ENCODE measurements at regions of chr7 and their contacts with region 1.

Region 1: DNA sequence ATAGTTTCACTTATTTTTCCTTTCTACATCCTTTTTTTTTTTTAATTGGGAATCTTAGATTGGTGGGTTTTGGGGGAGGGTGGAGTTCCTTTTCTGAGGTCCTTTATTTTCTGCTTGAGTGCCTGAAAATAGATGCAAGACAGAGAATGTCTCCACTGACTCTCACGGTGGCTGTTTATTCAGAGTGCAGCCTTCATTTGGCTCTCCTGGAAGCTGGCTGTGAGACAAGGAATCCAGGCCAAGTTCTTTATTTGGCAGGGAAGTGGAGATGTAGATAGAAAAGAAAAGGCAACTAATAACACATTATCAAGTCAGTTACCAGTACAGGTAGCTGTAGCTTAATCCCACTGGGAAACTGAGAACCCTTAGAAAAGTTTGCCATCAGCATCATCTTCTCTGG is 118.6 kb downstream of the CNTNAP2 start:
- DNase-seq: no peak
- ATAC-seq: peak; percentile 59

Region 2: GRCh38 chr7:146249272-146249671 is 14.1 kb after region 1 on chr7:
- intact Hi-C with region 1: loop called (anchors 2 kb)
- DNase-seq: no peak
- ATAC-seq: no peak

Region 3: GRCh38 chr7:146510088-146510680 is 275.0 kb after region 1 on chr7:
- intact Hi-C with region 1: no loop called
- DNase-seq: no peak
- ATAC-seq: no peak

Measured in Right ventricle myocardium superior (tissue), 1 donor.